ENCODE measurements at regions of chr2 and their contacts with region 1.

Region 1: DNA sequence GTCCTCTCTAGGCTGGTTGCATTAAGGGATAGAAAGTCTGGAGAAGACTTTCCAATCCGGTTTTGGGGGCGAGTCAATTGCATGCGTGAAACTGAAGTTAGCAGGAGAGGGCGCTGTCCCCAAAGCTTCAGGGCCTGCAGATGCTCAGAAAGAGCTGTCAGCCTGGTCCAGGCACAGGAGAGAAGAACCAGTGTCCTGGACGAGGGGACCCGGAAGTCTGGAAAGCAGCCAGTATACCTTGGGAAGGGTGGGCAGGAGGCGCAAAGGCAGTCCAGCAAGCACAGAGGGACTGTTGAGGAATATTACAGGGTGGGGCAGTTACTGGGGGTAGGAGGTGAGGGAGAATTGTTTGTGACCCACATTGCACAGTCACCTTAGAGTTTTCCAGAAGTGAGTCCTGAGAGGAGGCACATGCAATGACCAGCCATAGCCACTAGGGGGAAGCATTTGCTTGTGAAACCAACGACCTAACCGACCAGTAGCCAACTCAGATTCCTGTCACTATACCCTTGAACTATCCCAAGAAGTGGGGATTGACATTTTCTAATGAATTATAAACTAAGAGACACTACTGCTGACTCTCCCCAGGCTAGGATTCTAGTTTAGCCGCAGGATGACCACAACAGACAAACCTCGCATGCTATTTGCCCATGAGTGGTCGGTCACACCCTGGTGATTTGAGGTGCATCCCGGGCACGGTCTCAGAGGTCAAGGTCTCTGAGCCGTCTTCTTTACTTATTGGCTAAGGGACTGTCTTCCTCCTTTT is 172.8 kb downstream of the RDH14 start:
- DNase-seq: peak; percentile 74
- H3K4me3 ChIP-seq: no peak overlapping the region
- H3K27ac ChIP-seq: no peak overlapping the region
- H3K4me1 ChIP-seq: peaks cover 12% of the 10 kb centered on the region
- H3K27me3 ChIP-seq: no peaks in the 10 kb centered on the region
- CTCF ChIP-seq: peak; percentile 85 to 92
- POLR2A ChIP-seq: no peak

Region 2: DNA sequence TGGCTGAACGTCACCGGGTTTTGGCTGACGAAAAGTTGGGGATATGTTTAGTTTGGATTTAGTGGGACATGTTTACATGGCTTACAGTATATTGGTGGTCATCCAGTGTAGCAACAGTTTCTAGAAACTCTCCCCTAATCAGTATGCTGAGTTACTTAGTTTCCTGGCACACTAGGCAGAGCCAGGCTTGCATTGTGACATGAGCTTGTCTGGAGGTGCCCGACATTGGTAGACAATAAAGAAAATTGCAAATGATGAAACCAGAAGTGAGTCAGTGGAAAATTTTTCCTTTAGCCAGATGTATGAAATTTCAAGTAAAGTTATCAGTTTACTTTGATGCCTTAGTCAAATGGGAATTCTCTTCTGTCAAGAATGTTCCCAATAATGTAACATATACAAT is 103.3 kb before region 1 on chr2:
- CTCF ChIA-PET with region 1: no interaction called
- POLR2A ChIA-PET with region 1: no interaction called
- dilution Hi-C with region 1: no loop called
- intact Hi-C with region 1: no loop called
- DNase-seq: peak; percentile 9
- H3K4me3 ChIP-seq: no peak overlapping the region
- H3K27ac ChIP-seq: no peak overlapping the region
- H3K4me1 ChIP-seq: no peaks in the 10 kb centered on the region
- H3K27me3 ChIP-seq: no peaks in the 10 kb centered on the region
- CTCF ChIP-seq: no peak
- POLR2A ChIP-seq: no peak

Region 3: DNA sequence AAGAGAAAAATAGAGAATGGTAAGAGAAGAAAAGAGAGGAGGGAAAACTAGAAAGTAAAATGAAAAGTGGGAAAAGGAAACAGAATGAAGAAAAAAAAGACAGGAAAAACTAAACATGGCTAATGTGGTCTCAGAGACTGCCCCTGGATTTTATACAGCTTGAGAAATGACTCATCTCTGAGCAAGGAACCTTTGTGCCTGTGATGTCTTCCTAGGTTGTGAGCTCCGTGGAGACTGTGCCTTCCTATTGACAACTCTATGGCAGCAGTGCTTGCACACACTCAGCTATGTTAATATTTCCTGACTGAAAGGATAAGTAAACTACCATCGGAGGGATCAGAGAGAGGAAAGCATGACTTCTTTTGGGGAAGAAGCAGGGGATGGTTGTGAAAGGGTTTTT is 30.9 kb before region 1 on chr2:
- CTCF ChIA-PET with region 1: no interaction called
- POLR2A ChIA-PET with region 1: no interaction called
- dilution Hi-C with region 1: no loop called
- intact Hi-C with region 1: no loop called
- DNase-seq: peak; percentile 73
- H3K4me3 ChIP-seq: no peak overlapping the region
- H3K27ac ChIP-seq: peak overlapping the region; percentile 11
- H3K4me1 ChIP-seq: peaks cover 5% of the 10 kb centered on the region
- H3K27me3 ChIP-seq: no peaks in the 10 kb centered on the region
- CTCF ChIP-seq: no peak
- POLR2A ChIP-seq: no peak

Region 4: GRCh38 chr2:18435421-18436037 is 47.9 kb after region 1 on chr2:
- CTCF ChIA-PET with region 1: interaction called, 3 read pairs
- POLR2A ChIA-PET with region 1: no interaction called
- dilution Hi-C with region 1: no loop called
- intact Hi-C with region 1: loop called (anchors 1 kb)
- DNase-seq: peak; percentile 75
- H3K4me3 ChIP-seq: no peak overlapping the region
- H3K27ac ChIP-seq: no peak overlapping the region
- H3K4me1 ChIP-seq: peaks cover 5% of the 10 kb centered on the region
- H3K27me3 ChIP-seq: no peaks in the 10 kb centered on the region
- CTCF ChIP-seq: peak; percentile 39 to 51
- POLR2A ChIP-seq: no peak

Region 5: GRCh38 chr2:18455236-18455862 is 67.7 kb after region 1 on chr2:
- CTCF ChIA-PET with region 1: no interaction called
- POLR2A ChIA-PET with region 1: no interaction called
- dilution Hi-C with region 1: no loop called
- intact Hi-C with region 1: loop called (anchors 1 kb)
- DNase-seq: no peak
- H3K4me3 ChIP-seq: no peak overlapping the region
- H3K27ac ChIP-seq: no peak overlapping the region
- H3K4me1 ChIP-seq: no peaks in the 10 kb centered on the region
- H3K27me3 ChIP-seq: no peaks in the 10 kb centered on the region
- CTCF ChIP-seq: no peak
- POLR2A ChIP-seq: no peak